ENCODE measurements at regions of chr2 and their contacts with region 1.

Region 1: DNA sequence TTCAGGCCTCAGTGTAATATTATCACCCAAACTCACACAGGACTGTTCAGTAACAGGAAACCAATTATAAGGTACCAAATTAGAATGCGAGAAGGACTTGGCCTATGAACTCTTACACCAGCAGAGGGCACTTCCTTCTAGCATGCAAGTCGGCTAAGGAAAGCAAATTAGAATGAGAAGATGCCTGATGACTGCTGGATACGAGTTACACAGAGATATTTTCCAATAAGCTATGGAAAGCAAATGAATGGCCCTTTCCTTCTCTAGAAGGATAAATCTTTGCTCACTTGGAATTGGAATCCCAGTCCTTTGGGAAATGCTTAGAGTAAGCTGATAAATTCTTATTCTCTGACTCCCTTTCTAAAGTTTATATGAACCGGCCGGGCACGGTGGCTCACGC is 109.8 kb downstream of the AP1S3 start:
- DNase-seq: peak; percentile 62
- ATAC-seq: peak; percentile 60
- H3K4me3 ChIP-seq: no peak overlapping the region
- H3K4me3 Mint-ChIP-seq: no peak overlapping the region
- H3K27ac ChIP-seq: no peak overlapping the region
- H3K27ac Mint-ChIP-seq: no peak overlapping the region
- H3K4me1 ChIP-seq: peaks cover 0 to 4% of the 10 kb centered on the region in 2 donors
- H3K4me1 Mint-ChIP-seq: peaks cover 6% of the 10 kb centered on the region
- H3K27me3 ChIP-seq: no peaks in the 10 kb centered on the region
- H3K27me3 Mint-ChIP-seq: no peaks in the 10 kb centered on the region
- CTCF ChIP-seq: peak; percentile 67

Region 2: DNA sequence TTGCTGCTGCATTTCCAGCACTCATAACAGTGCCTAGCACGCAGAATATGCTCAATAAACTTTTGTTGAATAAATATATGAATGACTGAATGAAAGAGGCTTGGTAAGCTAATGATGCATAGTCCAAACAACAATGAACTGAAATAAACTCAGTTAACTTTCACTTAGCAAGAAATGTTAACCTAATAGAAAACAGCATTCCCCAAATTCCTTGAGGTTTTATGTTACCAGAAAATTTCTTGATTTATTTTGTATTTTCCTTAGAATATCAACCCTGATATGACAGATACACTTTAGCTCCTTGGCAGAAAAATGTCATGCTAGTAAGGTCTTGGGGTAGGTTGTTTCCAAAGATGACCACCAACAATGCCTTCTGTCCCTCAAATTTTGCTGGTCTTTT is 458.2 kb before region 1 on chr2:
- CTCF ChIA-PET with region 1: no interaction called
- POLR2A ChIA-PET with region 1: no interaction called
- intact Hi-C with region 1: no loop called
- DNase-seq: no peak
- ATAC-seq: no peak
- H3K4me3 ChIP-seq: no peak overlapping the region
- H3K4me3 Mint-ChIP-seq: no peak overlapping the region
- H3K27ac ChIP-seq: no peak overlapping the region
- H3K27ac Mint-ChIP-seq: no peak overlapping the region
- H3K4me1 ChIP-seq: no peaks in the 10 kb centered on the region
- H3K4me1 Mint-ChIP-seq: no peaks in the 10 kb centered on the region
- H3K27me3 ChIP-seq: no peaks in the 10 kb centered on the region
- H3K27me3 Mint-ChIP-seq: no peaks in the 10 kb centered on the region
- CTCF ChIP-seq: no peak

Region 3: DNA sequence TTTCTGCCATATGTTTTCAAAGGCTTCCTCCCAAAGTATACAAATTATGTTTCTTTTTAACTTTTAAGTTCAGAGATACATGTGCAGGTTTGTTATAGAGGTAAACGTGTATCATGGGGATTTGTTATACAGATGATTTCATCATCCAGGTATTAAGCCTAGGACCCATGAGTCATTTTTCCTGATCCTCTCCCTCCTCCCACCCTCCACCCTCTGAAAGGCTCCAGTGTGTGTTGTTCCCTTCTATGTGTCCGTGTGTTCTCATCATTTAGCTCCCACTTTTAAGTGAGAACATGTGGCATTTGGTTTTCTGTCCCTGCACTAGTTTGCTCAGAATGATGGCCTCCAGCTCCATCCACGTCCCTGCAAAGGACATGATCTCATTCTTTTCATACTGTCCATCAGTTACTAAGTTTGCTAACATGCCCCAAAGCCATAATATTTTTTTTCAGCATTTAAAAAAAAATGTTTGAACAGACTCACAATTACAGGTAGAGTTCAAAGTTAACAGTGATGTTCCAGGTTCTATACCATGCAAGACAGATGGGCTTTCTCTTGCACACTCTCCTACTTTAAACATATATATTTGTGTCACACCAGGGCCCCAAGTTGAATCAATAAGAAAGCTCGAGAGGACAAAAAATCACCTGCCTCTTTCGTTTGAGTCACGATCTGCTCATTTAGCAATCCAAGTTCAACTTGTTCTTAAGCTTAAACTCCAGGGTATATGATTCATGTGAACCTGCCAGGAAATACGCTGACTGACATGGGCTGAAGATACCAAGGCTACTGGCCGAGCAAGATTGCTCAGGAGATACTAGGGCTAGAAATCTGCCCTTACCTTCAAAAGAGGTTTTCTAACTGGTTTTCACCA is 32.2 kb after region 1 on chr2:
- CTCF ChIA-PET with region 1: no interaction called
- POLR2A ChIA-PET with region 1: no interaction called
- intact Hi-C with region 1: no loop called
- DNase-seq: no peak
- ATAC-seq: no peak
- H3K4me3 ChIP-seq: no peak overlapping the region
- H3K4me3 Mint-ChIP-seq: no peak overlapping the region
- H3K27ac ChIP-seq: no peak overlapping the region
- H3K27ac Mint-ChIP-seq: no peak overlapping the region
- H3K4me1 ChIP-seq: peaks cover 0 to 6% of the 10 kb centered on the region in 2 donors
- H3K4me1 Mint-ChIP-seq: peaks cover 7% of the 10 kb centered on the region
- H3K27me3 ChIP-seq: no peaks in the 10 kb centered on the region
- H3K27me3 Mint-ChIP-seq: no peaks in the 10 kb centered on the region
- CTCF ChIP-seq: no peak

Region 4: DNA sequence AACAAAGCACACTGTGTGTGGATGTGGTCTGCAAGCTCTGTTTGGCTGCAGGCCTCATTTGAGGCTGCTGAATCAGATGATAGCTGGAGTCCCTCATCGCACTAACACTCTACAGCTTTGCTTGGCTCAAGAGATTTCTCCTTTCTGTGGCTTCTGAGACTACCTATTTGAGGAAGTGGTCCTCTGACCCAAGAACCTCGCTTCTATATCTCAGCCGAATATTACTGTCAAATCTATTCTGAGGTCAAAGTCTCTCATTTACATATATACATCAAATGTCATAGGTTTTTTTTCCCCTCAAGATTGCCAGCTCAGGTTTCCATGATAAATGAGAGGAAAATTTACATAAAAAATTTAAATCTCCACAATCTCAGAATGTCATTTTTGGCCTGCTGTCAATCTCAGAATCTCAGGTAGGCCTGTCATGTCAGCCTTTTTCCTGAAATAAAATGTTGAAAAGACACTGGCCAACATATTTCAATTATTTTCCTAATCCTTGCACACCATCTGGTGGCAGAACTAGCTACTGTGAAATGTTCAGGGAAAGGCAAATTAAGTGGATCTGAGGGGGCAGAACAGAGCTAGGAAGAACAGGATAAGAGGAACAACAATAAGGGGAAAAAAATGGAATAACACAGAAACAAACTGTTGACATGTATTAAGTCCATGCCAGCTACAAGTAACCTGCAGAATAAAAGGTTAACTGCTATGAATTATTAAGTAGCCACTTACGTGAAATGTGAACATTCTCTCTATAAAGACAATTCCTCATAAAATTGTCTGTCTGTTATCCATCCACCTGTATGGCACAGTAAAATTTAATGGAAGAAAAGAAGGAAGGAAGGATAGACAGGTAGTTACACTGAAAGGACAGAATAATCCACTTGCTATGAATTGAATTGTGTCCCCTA is 70.5 kb after region 1 on chr2:
- CTCF ChIA-PET with region 1: interaction called, 10 read pairs
- POLR2A ChIA-PET with region 1: no interaction called
- intact Hi-C with region 1: no loop called
- DNase-seq: peak; percentile 57
- ATAC-seq: peak; percentile 74
- H3K4me3 ChIP-seq: no peak overlapping the region
- H3K4me3 Mint-ChIP-seq: peak overlapping the region; percentile 0
- H3K27ac ChIP-seq: peak overlapping the region in 1 of 2 donors; percentile 7
- H3K27ac Mint-ChIP-seq: peak overlapping the region; percentile 56
- H3K4me1 ChIP-seq: peaks cover 14 to 21% of the 10 kb centered on the region in 2 donors
- H3K4me1 Mint-ChIP-seq: peaks cover 49% of the 10 kb centered on the region
- H3K27me3 ChIP-seq: no peaks in the 10 kb centered on the region
- H3K27me3 Mint-ChIP-seq: no peaks in the 10 kb centered on the region
- CTCF ChIP-seq: no peak

Region 5: DNA sequence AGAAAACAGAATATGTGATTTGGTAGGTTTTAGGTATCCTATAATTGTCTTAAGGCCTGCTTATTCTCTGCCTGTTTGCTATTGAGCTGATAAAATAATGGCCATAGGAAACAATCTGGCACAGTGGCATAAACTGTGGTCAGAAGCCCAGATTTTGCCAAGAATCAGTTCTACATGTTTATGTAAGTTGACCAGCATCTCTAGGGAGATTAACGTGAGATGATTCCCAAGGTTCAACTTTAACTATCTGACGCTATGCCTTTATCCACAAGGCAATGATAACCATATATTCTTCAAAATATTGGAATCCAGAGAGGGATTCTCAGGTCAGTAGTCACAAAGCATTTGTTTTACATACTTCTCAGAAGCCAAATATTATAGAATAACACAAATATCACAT is 84.2 kb after region 1 on chr2:
- CTCF ChIA-PET with region 1: no interaction called
- POLR2A ChIA-PET with region 1: no interaction called
- intact Hi-C with region 1: no loop called
- DNase-seq: no peak
- ATAC-seq: no peak
- H3K4me3 ChIP-seq: no peak overlapping the region
- H3K4me3 Mint-ChIP-seq: no peak overlapping the region
- H3K27ac ChIP-seq: no peak overlapping the region
- H3K27ac Mint-ChIP-seq: no peak overlapping the region
- H3K4me1 ChIP-seq: peaks cover 0 to 7% of the 10 kb centered on the region in 2 donors
- H3K4me1 Mint-ChIP-seq: peaks cover 50% of the 10 kb centered on the region
- H3K27me3 ChIP-seq: no peaks in the 10 kb centered on the region
- H3K27me3 Mint-ChIP-seq: no peaks in the 10 kb centered on the region
- CTCF ChIP-seq: no peak

Region 6: GRCh38 chr2:223860809-223861738 is 133.5 kb after region 1 on chr2:
- CTCF ChIA-PET with region 1: interaction called, 5 read pairs
- POLR2A ChIA-PET with region 1: no interaction called
- intact Hi-C with region 1: loop called (anchors 1 kb)
- DNase-seq: no peak
- ATAC-seq: no peak
- H3K4me3 ChIP-seq: no peak overlapping the region
- H3K4me3 Mint-ChIP-seq: no peak overlapping the region
- H3K27ac ChIP-seq: no peak overlapping the region
- H3K27ac Mint-ChIP-seq: peak overlapping the region; percentile 56
- H3K4me1 ChIP-seq: peaks cover 0 to 9% of the 10 kb centered on the region in 2 donors
- H3K4me1 Mint-ChIP-seq: peaks cover 15% of the 10 kb centered on the region
- H3K27me3 ChIP-seq: no peaks in the 10 kb centered on the region
- H3K27me3 Mint-ChIP-seq: no peaks in the 10 kb centered on the region
- CTCF ChIP-seq: no peak

Region 7: DNA sequence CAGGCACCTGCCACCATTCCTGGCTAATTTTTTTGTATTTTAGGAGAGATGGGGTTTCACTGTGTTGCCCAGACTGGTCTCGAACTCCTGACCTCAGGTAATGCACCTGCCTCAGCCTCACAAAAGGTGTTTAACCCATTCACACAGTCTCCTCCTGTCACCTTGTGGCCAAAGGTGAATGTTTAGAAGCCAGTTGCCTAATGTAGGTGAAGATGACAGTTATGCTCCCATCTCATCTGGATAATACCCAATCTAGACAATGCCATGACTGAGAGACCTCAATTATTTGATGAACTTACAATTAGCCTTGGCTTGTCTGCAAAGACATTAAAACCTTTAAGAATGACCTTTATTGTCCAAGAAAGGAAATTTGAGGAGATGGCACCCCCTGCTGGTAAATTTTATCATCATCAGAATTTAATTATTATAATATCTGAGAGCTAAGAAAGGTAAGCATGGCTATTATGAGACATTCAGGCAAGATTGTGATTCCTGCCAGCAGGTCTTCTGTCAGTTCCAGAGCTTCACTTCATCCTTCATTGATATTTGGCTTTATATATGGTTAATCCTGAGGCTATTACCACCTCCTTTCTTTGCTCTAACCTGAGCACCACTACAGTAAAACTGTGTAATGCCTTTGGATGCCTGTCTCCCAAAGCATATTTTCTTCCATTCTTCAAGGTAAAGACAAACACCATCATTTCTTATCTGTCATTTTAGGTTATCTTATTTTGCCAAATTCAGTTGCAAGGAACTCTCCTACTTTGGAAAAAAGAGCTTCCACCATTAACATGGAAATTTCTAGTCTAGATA is 556.8 kb after region 1 on chr2:
- CTCF ChIA-PET with region 1: interaction called, 15 read pairs
- POLR2A ChIA-PET with region 1: no interaction called
- intact Hi-C with region 1: loop called (anchors 1 kb)
- DNase-seq: peak; percentile 64
- ATAC-seq: no peak
- H3K4me3 ChIP-seq: no peak overlapping the region
- H3K4me3 Mint-ChIP-seq: no peak overlapping the region
- H3K27ac ChIP-seq: no peak overlapping the region
- H3K27ac Mint-ChIP-seq: no peak overlapping the region
- H3K4me1 ChIP-seq: no peaks in the 10 kb centered on the region
- H3K4me1 Mint-ChIP-seq: no peaks in the 10 kb centered on the region
- H3K27me3 ChIP-seq: peaks cover 0 to 10% (median 0%) of the 10 kb centered on the region in 4 experiments
- H3K27me3 Mint-ChIP-seq: peaks cover 34% of the 10 kb centered on the region
- CTCF ChIP-seq: peak; percentile 82